Mammary epithelial cell (primary cell): ENCODE measurements at regions of chr13 and their contacts with region 1.

Region 1: DNA sequence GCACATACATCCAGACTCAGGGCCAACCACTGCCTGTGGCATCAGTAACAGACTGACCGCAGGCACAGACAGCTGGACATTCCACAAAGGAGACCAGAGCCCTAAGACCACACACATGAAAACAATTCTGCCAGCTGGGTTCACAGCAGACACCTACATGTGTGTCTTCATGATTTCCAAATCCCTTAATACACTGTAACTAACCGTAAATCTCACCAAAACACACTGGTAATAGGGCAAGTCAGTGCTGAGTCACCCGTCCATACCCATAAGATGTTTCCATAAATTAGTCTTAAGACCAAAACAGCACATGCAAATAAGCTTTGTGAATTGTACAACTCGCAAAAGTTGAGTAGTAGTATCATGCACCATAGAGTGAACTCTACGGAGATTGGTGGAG is 65.4 kb downstream of the TUBGCP3 start:
- DNase-seq: peak; percentile 6
- H3K4me3 ChIP-seq: no peak overlapping the region
- H3K27ac ChIP-seq: no peak overlapping the region
- H3K4me1 ChIP-seq: no peaks in the 10 kb centered on the region
- H3K27me3 ChIP-seq: no peaks in the 10 kb centered on the region
- CTCF ChIP-seq: no peak

Region 2: GRCh38 chr13:112431734-112432133 is 90.8 kb before region 1 on chr13:
- CTCF ChIA-PET with region 1: no interaction called
- dilution Hi-C with region 1: no loop called
- in situ Hi-C with region 1: no loop called
- intact Hi-C with region 1: no loop called
- DNase-seq: no peak
- H3K4me3 ChIP-seq: no peak overlapping the region
- H3K27ac ChIP-seq: no peak overlapping the region
- H3K4me1 ChIP-seq: no peaks in the 10 kb centered on the region
- H3K27me3 ChIP-seq: no peaks in the 10 kb centered on the region
- CTCF ChIP-seq: no peak

Region 3: DNA sequence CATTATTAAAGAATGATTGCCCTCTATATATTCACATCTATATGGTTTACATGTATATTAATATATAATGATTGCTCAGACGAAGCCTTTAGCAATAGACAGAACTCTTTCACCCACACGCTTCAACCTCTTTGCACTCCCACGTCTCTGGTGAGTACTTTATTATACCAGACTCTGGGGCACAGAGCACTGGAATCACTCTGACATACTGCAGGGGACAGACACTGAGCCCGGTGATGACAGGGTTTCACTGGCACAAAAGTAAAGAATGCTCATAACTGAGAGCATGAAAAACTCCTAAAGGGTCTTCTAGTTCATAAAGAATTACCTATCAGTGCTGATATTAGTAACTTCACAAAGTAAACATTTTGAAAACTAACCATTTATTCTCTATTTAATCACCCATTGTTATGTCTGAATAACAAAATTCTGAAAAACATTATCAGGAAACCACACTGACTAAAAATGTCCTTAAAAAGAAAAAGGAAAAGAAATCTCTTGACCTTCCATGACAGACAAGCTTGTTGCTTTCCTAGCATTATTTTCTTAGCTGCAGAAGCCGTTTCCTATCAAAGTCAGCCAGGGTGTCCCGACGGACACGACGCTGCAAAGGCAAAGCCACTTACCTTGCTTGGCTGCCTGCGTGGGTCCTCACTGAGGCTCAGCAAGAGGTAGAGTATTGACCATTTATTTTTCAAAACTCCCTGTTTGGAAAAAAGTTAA is 36.3 kb after region 1 on chr13:
- CTCF ChIA-PET with region 1: no interaction called
- dilution Hi-C with region 1: loop called (anchors 5 kb)
- in situ Hi-C with region 1: no loop called
- intact Hi-C with region 1: no loop called
- DNase-seq: no peak
- H3K4me3 ChIP-seq: no peak overlapping the region
- H3K27ac ChIP-seq: no peak overlapping the region
- H3K4me1 ChIP-seq: no peaks in the 10 kb centered on the region
- H3K27me3 ChIP-seq: no peaks in the 10 kb centered on the region
- CTCF ChIP-seq: no peak

Region 4: DNA sequence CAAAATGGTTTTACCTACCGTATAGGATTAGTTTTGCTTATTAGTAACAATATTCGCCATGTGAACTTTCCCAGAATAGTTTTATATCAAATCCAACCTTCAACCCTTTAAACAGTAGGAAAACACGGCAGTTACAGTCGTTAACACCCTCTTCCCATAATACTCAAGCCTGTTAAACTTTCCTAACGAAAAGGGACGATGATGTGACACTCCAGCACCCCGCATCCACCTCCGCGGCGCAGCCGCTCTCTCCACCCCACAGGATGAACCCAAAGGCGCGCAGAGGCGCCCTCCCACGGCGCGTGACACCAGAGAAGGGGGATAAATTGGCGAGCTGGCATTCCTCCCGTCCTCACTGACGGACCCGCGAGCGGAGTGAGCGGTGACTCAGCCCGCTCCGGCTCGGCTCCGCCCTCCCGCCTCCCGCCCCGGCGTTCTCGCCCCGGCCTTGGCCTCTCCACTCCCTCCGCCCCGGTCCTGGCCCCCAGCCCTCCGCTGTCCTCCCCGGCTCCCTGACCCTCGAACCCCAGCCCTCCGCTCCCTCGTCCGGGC is 64.7 kb after region 1 on chr13:
- CTCF ChIA-PET with region 1: no interaction called
- dilution Hi-C with region 1: no loop called
- in situ Hi-C with region 1: no loop called
- intact Hi-C with region 1: no loop called
- DNase-seq: peak; percentile 75
- H3K4me3 ChIP-seq: peak overlapping the region; percentile 92 to 97 (median 97)
- H3K27ac ChIP-seq: peak overlapping the region; percentile 68
- H3K4me1 ChIP-seq: peaks cover 15% of the 10 kb centered on the region
- H3K27me3 ChIP-seq: no peaks in the 10 kb centered on the region
- CTCF ChIP-seq: no peak